ENCODE measurements at regions of chrX and their contacts with region 1.

Region 1: GRCh38 chrX:35040871-35041270 is 98.3 kb downstream of the FAM47B start:
- DNase-seq: no peak
- H3K4me3 ChIP-seq: no peak overlapping the region
- CTCF ChIP-seq: no peak

Region 2: DNA sequence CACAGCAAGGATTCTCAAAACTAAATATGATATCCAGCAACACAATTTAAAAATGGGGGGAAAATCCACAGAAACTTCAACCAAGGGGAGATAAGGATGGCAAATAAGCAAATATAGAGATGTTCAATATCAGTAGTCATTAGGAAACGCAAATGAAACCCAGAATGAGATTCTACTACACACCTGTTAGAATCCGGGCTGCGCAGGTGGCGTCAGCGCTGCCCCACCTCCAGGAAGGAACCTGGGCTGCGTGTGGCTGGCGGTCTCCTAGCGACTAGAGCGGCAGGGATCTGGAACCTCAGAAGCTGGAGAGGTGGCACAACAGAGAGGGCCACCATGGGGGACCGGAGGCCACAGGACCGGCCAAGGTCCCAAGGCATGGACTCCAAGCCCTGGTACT is 98.4 kb before region 1 on chrX and contains the start of gene FAM47B:
- in situ Hi-C with region 1: no loop called
- DNase-seq: no peak
- H3K4me3 ChIP-seq: no peak within 1 kb of the TSS
- CTCF ChIP-seq: no peak

Region 3: DNA sequence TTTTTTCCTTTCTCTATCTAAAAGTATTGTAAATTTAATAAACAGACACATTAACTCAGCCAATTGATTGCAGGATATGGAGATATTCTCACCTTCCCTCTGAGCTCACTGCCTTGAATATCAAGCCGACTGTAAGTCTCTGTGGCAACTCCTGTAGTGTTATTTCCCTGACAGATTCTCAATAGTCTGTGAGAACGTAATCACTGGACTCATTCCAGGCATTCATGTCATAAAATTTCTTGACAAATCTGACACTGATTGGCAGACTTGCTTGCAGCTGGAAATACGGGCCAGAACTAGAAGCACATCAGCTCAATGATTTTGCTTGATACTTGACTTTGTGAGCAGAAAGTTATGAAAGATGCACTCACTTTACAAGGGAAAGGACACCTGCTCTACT is 68.7 kb before region 1 on chrX:
- in situ Hi-C with region 1: no loop called
- DNase-seq: no peak
- H3K4me3 ChIP-seq: no peak overlapping the region
- CTCF ChIP-seq: no peak

Region 4: DNA sequence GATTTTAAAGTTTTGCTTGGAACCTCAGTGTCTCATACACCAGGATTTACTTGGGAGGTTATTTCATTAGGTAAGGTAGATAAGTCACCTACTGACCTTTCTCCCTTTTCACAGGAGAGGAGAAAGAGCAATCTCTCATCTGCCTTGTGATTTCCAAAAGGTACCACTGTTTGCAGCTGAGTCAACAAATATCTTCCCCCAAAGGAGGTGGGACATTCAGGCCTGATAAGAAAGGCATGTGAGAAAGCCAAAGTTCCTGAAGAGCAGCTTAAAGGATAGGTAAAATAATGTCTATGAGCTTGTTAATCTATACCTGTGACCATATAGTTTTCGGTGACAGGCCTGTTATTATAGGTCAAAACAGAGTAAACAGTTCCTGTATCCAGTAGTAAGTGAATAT is 53.2 kb before region 1 on chrX:
- in situ Hi-C with region 1: no loop called
- DNase-seq: no peak
- H3K4me3 ChIP-seq: no peak overlapping the region
- CTCF ChIP-seq: no peak

Region 5: GRCh38 chrX:34999702-35000101 is 41.2 kb before region 1 on chrX:
- in situ Hi-C with region 1: no loop called
- DNase-seq: no peak
- H3K4me3 ChIP-seq: no peak overlapping the region
- CTCF ChIP-seq: no peak

Region 6: DNA sequence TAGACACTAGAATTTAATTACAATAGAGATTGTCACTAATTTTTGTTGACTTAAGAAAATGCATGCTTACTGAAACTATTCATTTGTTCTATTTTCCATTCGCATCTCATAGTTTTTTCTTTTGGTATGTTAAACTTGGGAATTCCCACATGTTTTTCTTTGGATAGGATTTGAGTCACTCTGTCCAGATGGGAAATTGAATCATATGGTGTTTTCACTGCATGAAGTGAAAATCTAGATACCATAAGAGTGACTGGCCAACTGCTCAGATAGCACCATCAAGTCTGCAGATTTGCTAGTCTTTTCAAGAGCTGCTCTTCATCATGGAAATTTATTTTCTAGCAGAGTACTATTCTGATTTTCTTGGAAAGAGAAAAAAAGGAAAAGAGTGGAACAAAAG is 74.3 kb after region 1 on chrX:
- in situ Hi-C with region 1: loop called (anchors 5 kb)
- DNase-seq: peak; percentile 12
- H3K4me3 ChIP-seq: no peak overlapping the region
- CTCF ChIP-seq: no peak

Measured in astrocyte of the cerebellum (primary cell).